ENCODE measurements at regions of chr3 and their contacts with region 1.

Region 1: DNA sequence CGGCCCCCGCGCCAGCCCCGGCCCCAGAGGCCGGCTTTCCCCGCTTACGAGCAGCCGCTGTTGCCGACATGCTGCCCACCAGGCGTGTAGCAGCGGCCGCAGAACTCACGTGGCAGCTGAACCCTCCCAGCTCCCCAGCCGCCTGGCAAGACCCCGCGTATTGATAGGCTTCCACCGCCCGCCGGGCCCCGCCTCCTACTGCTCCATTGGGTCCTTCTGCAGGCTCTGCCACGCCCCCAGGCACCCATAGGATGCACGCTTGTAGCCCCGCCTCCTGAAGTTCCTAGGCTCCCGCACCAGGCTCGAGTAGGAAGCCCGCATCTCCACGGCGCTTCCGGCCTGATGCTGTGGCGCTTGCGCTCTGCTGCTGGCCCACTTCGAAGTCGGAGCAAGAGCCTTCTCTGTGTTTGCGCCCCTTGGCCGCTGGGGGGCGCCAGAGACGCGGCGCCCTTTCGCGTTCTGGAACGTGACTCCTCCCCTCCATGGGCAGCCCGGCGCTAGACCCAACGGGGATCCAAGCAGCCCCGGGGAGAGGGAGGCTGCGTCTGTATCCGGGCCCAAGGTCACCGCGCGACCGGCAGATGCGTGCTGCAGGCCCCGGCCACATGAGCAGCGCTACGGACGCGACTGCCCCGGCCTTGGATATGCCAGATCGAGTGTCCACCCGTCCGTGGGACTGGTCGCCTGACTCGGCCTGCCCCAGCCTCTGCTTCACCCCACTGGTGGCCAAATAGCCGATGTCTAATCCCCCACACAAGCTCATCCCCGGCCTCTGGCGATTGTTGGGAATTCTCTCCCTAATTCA is at the starts of genes PARP3 and RRP9:
- DNase-seq: peak; percentile 97 to 100 (median 99)
- ATAC-seq: peak; percentile 98
- H3K4me3 ChIP-seq: peak within 1 kb of the TSS; percentile 78
- H3K4me3 Mint-ChIP-seq: peak within 1 kb of the TSS; percentile 72 to 94 (median 90)
- H3K27ac ChIP-seq: peak within 1 kb of the TSS; percentile 80
- H3K27ac Mint-ChIP-seq: peak within 1 kb of the TSS; percentile 78 to 92 (median 89)
- H3K4me1 ChIP-seq: peaks cover 19 to 23% of the 10 kb centered on the region in 2 donors
- H3K4me1 Mint-ChIP-seq: peaks cover 22 to 40% (median 31%) of the 10 kb centered on the region in 7 donors
- H3K27me3 ChIP-seq: no peaks in the 10 kb centered on the region
- H3K27me3 Mint-ChIP-seq: no peaks in the 10 kb centered on the region
- total RNA-seq, gene PARP3: 7.7 to 21.5 (median 11.2) TPM
- total RNA-seq, gene RRP9: 10.2 to 34.2 (median 16.6) TPM

Region 2: DNA sequence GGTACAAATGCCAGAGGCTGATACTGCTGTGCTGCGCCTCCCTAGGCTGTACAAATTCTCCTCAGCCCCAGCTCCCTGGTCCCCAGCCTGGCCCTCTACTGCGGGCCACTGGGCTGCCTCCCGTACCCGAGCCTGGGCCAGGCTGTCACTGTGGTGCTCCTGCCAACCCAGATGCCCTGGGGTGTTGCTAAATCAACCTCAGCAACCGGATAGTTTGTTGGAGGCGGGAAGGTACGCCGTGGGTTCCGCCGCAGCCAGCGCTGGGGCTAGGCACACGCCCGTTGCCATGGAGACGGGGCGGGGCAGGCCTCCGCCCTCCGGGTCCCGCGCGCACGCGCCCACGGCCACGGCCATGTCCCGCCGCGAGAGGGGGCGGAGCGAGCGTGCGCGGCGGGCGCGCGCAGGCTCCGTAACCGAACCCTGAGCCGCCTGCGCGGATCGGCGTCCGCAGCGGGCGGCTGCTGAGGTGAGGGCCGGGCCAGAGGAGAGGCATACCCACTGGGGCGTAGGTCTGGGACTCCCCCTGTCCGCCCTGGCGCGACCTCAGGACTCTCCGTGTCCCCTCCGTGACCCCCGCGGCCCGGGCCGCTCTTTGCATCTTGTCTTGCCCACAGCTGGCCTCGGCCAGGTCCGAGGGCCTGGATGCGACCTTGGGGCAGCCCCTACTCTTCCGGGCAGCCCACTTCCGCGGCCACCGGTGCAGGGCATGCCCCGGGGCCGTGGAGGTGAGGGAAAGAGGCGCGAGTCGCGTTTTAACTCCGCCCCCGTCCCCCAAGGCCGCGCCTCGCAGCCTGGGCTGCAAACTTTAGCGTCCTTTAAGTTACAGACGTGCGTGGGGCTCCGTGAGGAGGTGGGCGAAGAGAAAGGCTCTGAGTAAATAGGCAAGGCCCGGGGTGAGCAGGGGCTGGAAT is 270.9 kb before region 1 on chr3 and contains the start of gene TEX264:
- CTCF ChIA-PET with region 1: no interaction called
- POLR2A ChIA-PET with region 1: no interaction called
- intact Hi-C with region 1: loop called (anchors 2 to 5 kb)
- DNase-seq: peak; percentile 90 to 98 (median 95)
- ATAC-seq: peak; percentile 90
- H3K4me3 ChIP-seq: peak within 1 kb of the TSS; percentile 94
- H3K4me3 Mint-ChIP-seq: peak within 1 kb of the TSS; percentile 89 to 95 (median 92)
- H3K27ac ChIP-seq: peak within 1 kb of the TSS; percentile 85
- H3K27ac Mint-ChIP-seq: peak within 1 kb of the TSS; percentile 24 to 97 (median 93)
- H3K4me1 ChIP-seq: peaks cover 53 to 60% of the 10 kb centered on the region in 2 donors
- H3K4me1 Mint-ChIP-seq: peaks cover 59 to 82% (median 73%) of the 10 kb centered on the region in 7 donors
- H3K27me3 ChIP-seq: no peaks in the 10 kb centered on the region
- H3K27me3 Mint-ChIP-seq: no peaks in the 10 kb centered on the region
- total RNA-seq, gene TEX264: 34.4 to 65.0 (median 41.7) TPM

Region 3: GRCh38 chr3:51974963-51975851 is 33.2 kb after region 1 on chr3 and contains the start of gene ABHD14A:
- CTCF ChIA-PET with region 1: interaction called, 28 read pairs
- POLR2A ChIA-PET with region 1: interaction called, 34 read pairs
- intact Hi-C with region 1: loop called (anchors 1 kb)
- DNase-seq: peak; percentile 68 to 85 (median 73)
- ATAC-seq: peak; percentile 80
- H3K4me3 ChIP-seq: peak within 1 kb of the TSS; percentile 82
- H3K4me3 Mint-ChIP-seq: peak within 1 kb of the TSS; percentile 83 to 100 (median 94)
- H3K27ac ChIP-seq: peak within 1 kb of the TSS; percentile 77
- H3K27ac Mint-ChIP-seq: peak within 1 kb of the TSS; percentile 88 to 97 (median 92)
- H3K4me1 ChIP-seq: peaks cover 9 to 21% of the 10 kb centered on the region in 2 donors
- H3K4me1 Mint-ChIP-seq: peaks cover 26 to 53% (median 32%) of the 10 kb centered on the region in 7 donors
- H3K27me3 ChIP-seq: no peaks in the 10 kb centered on the region
- H3K27me3 Mint-ChIP-seq: no peaks in the 10 kb centered on the region
- total RNA-seq, gene ABHD14A: 9.9 to 23.7 (median 14.7) TPM

Region 4: DNA sequence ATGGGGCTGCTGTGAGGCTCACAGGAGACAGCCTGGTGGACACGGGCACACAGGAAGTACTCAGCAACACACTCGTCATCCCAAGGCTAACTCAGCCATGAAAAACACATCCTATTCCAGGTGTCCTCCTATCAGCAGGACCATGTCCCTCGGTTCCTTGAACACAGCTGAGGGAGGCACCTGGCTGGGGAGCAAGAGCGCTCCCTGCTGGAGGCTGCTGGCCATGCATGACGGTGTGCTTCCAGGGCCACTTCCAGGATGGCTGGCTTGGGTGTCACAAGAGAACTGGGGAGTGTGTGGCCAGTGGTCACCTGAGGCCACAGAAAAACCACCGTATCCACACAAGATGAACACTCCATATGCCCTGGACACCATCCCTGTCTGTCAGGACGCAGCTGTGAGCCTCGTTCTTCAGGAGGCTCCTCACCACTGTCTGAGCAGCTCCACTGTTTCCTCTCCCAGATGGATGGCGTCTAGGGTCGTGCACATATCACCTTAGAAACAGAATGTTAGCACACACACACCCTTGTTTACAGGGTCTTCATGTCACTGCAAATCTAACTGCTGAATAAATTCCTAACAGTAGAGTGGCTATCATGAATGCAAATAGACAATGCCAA is 181.2 kb after region 1 on chr3:
- CTCF ChIA-PET with region 1: interaction called, 4 read pairs
- POLR2A ChIA-PET with region 1: interaction called, 3 read pairs
- intact Hi-C with region 1: loop called in 1 of 2 experiments (anchors 5 kb)
- DNase-seq: peak; percentile 51 to 84 (median 70)
- ATAC-seq: peak; percentile 86
- H3K4me3 ChIP-seq: no peak overlapping the region
- H3K4me3 Mint-ChIP-seq: no peak overlapping the region
- H3K27ac ChIP-seq: no peak overlapping the region
- H3K27ac Mint-ChIP-seq: no peak overlapping the region
- H3K4me1 ChIP-seq: no peaks in the 10 kb centered on the region
- H3K4me1 Mint-ChIP-seq: peaks cover 0 to 28% (median 0%) of the 10 kb centered on the region in 7 donors
- H3K27me3 ChIP-seq: no peaks in the 10 kb centered on the region
- H3K27me3 Mint-ChIP-seq: no peaks in the 10 kb centered on the region

Region 5: DNA sequence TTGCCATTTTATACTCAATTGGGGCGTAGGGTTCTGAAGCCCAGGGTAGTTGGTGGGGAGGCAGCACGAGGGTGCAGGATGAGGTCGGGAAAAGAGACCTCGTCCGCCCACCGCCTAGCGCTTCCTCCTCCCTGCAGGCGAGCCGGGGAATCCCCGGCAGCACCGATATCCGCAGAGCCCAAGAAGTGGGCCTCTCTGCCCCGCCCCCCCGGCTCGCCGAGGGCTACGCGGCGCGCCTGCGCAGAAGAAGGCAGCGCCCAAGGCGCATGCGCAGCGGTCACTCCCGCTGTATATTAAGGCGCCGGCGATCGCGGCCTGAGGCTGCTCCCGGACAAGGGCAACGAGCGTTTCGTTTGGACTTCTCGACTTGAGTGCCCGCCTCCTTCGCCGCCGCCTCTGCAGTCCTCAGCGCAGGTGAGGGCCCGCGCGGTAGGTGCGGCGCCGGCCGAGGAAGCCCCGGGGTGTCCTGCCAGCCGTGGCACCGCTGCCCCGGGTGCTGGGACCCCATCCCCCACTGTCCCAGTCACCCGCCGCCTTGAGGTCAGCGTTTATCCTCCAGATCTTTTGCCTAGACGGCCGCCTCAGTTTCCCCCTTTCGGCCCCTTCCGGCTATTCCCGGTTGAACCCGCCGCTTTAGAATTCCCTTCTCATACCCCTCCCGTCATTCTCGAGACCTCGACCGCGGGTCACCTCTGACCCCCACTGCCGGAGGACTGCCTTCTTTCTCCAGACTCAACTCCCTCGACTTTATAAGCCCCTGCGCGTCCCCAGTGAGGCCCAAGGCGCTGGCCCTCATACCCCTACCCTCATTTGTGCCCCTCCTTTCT is 256.1 kb after region 1 on chr3 and contains the start of gene ALAS1:
- CTCF ChIA-PET with region 1: no interaction called
- POLR2A ChIA-PET with region 1: no interaction called
- intact Hi-C with region 1: loop called (anchors 1 kb)
- DNase-seq: peak; percentile 86 to 99 (median 94)
- ATAC-seq: peak; percentile 97
- H3K4me3 ChIP-seq: peak within 1 kb of the TSS; percentile 80
- H3K4me3 Mint-ChIP-seq: peak within 1 kb of the TSS; percentile 85 to 98 (median 96)
- H3K27ac ChIP-seq: peak within 1 kb of the TSS; percentile 94
- H3K27ac Mint-ChIP-seq: peak within 1 kb of the TSS; percentile 88 to 98 (median 94)
- H3K4me1 ChIP-seq: peaks cover 25 to 30% of the 10 kb centered on the region in 2 donors
- H3K4me1 Mint-ChIP-seq: peaks cover 33 to 56% (median 49%) of the 10 kb centered on the region in 7 donors
- H3K27me3 ChIP-seq: no peaks in the 10 kb centered on the region
- H3K27me3 Mint-ChIP-seq: no peaks in the 10 kb centered on the region
- total RNA-seq, gene ALAS1: 12.6 to 74.3 (median 27.4) TPM

Region 6: DNA sequence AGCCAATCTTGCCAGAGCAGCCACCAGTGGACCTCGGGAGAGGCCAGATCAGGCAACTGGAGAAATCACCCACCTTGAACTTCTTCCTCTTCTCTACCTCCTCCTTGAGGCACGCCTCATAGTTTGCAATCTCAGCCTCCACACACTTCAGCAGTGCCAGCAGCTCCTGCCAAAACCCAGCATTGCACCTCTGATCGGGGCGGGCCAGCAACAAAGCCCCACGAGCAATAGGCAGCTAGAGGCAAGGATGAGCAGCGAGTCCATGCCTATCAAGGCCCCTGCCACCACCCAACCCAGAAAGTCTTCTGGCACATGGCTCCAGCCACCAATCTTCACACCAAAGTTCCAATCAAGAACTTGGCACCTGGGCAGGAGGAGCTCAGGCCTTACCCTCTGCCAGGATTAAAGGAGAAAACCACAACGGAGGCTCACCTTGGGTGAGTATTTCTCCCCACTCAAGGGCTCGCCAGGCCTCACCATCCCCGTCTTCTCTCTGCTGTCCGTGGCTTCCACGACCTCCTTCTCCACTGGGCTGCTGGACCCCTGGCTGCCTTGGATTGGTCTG is 460.8 kb after region 1 on chr3:
- CTCF ChIA-PET with region 1: no interaction called
- POLR2A ChIA-PET with region 1: no interaction called
- intact Hi-C with region 1: no loop called
- DNase-seq: no peak
- ATAC-seq: no peak
- H3K4me3 ChIP-seq: no peak overlapping the region
- H3K4me3 Mint-ChIP-seq: no peak overlapping the region
- H3K27ac ChIP-seq: no peak overlapping the region
- H3K27ac Mint-ChIP-seq: peak overlapping the region in 1 of 9 donors; percentile 43
- H3K4me1 ChIP-seq: no peaks in the 10 kb centered on the region
- H3K4me1 Mint-ChIP-seq: peaks cover 0 to 7% (median 5%) of the 10 kb centered on the region in 7 donors
- H3K27me3 ChIP-seq: no peaks in the 10 kb centered on the region
- H3K27me3 Mint-ChIP-seq: no peaks in the 10 kb centered on the region

Region 7: GRCh38 chr3:52455283-52456168 is 513.5 kb after region 1 on chr3 and contains the start of gene NISCH:
- CTCF ChIA-PET with region 1: no interaction called
- POLR2A ChIA-PET with region 1: no interaction called
- intact Hi-C with region 1: loop called in 1 of 2 experiments (anchors 2 kb)
- DNase-seq: peak; percentile 92 to 99 (median 97)
- ATAC-seq: peak; percentile 98
- H3K4me3 ChIP-seq: peak within 1 kb of the TSS; percentile 98
- H3K4me3 Mint-ChIP-seq: peak within 1 kb of the TSS; percentile 87 to 96 (median 93)
- H3K27ac ChIP-seq: peak within 1 kb of the TSS; percentile 88
- H3K27ac Mint-ChIP-seq: peak within 1 kb of the TSS; percentile 96 to 100 (median 99)
- H3K4me1 ChIP-seq: peaks cover 15 to 23% of the 10 kb centered on the region in 2 donors
- H3K4me1 Mint-ChIP-seq: peaks cover 25 to 47% (median 41%) of the 10 kb centered on the region in 7 donors
- H3K27me3 ChIP-seq: no peaks in the 10 kb centered on the region
- H3K27me3 Mint-ChIP-seq: no peaks in the 10 kb centered on the region
- total RNA-seq, gene NISCH: 86.8 to 210 (median 162) TPM

Region 8: DNA sequence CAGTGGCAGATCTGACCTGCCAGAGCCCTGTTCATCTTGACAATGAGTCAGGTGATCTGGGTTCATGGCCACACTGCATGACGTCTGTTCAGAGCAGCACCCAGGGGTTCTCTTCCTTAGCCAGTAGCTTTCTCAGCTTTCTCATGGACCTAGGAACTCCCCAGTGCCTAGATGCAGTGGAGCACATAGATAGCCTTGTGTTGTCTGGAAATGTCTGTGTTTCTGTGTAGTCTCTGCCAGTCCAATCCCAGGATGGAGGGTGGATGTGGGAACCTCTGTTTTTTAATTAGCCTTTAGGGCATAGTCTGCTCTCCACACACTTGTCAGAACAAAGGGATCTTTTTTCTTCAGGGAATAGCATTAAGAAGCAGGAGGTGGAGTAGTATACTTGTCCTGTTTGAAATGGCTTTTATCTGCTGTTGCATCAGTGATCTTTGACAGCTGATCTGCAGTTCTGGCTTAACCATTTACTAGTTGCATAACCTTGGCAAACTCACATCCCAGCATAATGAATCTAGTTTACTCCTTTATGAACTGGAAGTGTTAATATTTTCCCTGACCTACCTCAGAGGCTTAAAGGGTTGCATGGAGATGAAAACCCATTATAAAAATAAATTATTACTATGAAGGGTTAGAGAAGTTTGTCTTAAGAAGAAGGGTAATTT is 1536.3 kb after region 1 on chr3:
- CTCF ChIA-PET with region 1: no interaction called
- POLR2A ChIA-PET with region 1: no interaction called
- intact Hi-C with region 1: no loop called
- DNase-seq: no peak
- ATAC-seq: no peak
- H3K4me3 ChIP-seq: no peak overlapping the region
- H3K4me3 Mint-ChIP-seq: no peak overlapping the region
- H3K27ac ChIP-seq: no peak overlapping the region
- H3K27ac Mint-ChIP-seq: no peak overlapping the region
- H3K4me1 ChIP-seq: no peaks in the 10 kb centered on the region
- H3K4me1 Mint-ChIP-seq: no peaks in the 10 kb centered on the region
- H3K27me3 ChIP-seq: no peaks in the 10 kb centered on the region
- H3K27me3 Mint-ChIP-seq: peaks cover 29 to 70% (median 37%) of the 10 kb centered on the region in 5 donors